ENCODE measurements at regions of chr15 and their contacts with region 1.

Region 1: GRCh38 chr15:69060041-69060481 is 45.6 kb downstream of the NOX5 start:
- DNase-seq: peak in 1 of 42 donors; percentile 12

Region 2: DNA sequence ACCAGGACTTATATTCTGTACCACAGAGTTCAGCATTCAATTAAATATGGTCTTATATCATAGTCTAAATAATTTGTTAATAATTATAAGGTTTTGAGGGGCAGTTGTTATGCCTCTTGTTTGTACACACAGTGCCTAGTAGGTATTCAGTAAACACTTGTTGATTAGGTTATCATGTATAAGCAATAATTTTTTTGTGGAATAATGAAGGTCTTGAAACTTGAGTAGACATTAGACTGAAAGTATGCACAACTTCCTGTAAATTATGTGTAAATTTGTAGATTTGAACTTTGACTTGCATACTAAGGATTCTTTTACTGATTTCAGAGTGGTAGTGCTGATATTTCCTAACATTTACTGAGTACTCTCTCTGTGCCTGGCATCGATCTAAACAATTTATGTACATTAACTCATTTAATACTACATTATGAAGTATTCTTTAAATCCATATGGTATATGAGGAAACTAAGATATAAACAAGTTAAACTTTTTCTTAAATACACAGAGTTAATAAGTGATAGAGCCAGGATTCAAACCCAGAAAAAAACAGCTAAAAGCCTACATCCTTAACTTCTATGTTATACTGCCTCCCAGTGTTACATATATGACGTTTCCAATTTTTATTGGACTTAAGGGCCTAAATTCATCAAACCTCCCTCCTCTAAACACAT is 165.4 kb after region 1 on chr15:
- intact Hi-C with region 1: loop called (anchors 10 kb)
- DNase-seq: no peak

Region 3: GRCh38 chr15:69265347-69265955 is 205.4 kb after region 1 on chr15:
- intact Hi-C with region 1: loop called (anchors 10 kb)
- DNase-seq: peak in 2 of 42 donors; percentile 14 to 22

Region 4: GRCh38 chr15:69394556-69395282 is 334.7 kb after region 1 on chr15:
- intact Hi-C with region 1: loop called (anchors 2 kb)
- DNase-seq: peak; percentile 74 to 95 (median 90)

Measured in head of caudate nucleus (tissue), 42 donors.